ENCODE measurements at regions of chr6 and their contacts with region 1.

Region 1: DNA sequence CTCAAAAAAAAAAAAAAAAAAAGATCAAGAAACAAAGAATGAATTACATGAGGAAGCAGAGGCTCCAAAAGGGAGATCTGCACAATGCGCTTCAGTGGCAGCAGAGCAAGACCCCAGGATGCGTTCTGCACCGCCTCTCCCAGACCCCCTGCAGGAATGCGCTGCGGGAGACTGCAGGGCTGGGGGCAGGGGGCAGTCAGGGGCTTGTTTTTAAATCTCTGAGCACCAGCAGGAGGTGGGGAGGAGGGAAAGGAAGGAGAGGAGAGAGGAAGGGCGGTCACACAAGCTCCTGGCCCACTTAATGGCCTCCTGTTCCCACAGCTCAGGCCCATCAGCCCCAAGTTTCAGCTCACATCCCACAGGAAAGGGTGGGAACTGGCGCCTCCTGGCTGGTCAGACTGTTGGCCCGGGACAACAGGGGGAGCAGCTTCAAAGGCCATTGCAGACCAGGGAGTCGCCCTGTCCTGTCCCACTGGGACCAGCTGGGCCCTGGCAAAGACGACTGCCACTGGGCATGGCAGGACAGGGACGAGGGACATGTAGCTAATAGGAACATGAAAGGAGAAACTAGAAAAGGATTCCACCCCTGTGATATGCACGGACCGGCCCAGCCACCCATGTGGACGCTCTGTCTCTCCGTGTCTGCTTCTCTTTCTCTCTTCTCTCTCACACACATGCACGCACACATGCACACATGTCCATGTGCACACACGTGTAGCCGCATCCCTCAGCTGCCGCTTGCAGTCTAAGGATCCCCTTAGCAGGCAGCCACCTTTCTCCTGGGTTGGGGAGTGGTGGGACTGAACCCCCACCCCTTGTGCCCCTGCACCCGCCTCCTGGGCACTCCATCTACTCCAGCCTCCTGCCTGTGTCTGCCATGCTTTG is 34.7 kb downstream of the TFEB start:
- DNase-seq: peak; percentile 50
- ATAC-seq: peak; percentile 69
- H3K4me3 Mint-ChIP-seq: no peak overlapping the region
- H3K27ac Mint-ChIP-seq: no peak overlapping the region
- H3K4me1 Mint-ChIP-seq: peaks cover 11% of the 10 kb centered on the region
- H3K27me3 Mint-ChIP-seq: no peaks in the 10 kb centered on the region
- CTCF ChIP-seq: no peak

Region 2: DNA sequence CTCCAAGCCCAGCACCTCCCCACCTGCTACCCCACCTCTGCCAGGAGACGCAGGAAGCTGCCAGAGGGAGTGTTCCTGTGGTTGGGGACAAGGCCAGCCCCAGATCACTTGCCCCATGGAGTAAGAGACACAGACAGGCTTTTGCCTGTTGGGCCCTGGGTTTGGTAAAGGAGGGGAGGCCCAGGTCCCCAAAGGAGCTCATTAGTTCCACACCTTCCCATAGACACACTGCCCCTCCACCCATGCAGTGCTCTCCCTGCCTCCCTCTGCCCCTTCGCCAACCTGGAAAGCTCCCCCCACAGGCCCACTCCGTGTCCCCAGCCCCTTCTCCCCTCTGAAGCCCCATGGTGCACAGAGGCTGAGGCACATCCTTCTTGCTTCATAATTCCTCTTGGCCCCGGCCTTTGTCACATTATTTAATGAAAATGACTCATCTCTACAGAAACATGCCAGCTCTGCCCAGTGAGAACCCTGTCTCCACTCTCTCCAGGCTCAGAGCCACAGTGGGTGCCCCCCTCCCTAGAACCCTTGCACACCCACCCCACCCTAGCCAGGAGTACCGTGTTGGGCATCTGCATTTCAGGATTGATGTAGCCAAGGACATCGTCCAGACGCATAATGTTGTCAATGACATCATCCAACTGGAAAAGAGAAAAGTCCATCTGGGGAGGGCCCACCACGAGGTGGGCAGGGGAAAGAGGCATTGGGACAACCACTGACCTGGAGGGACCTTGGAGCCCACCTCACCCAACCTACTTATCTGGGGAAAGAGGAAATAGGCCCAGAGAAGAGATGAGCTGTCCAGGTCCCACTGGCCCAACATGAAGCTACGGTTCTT is 11.3 kb before region 1 on chr6:
- CTCF ChIA-PET with region 1: interaction called, 24 read pairs
- POLR2A ChIA-PET with region 1: no interaction called
- DNase-seq: peak; percentile 4
- ATAC-seq: no peak
- H3K4me3 Mint-ChIP-seq: no peak overlapping the region
- H3K27ac Mint-ChIP-seq: no peak overlapping the region
- H3K4me1 Mint-ChIP-seq: peaks cover 19% of the 10 kb centered on the region
- H3K27me3 Mint-ChIP-seq: peaks cover 6% of the 10 kb centered on the region
- CTCF ChIP-seq: no peak

Region 3: GRCh38 chr6:41713650-41714291 is 13.1 kb after region 1 on chr6:
- CTCF ChIA-PET with region 1: interaction called, 39 read pairs
- POLR2A ChIA-PET with region 1: no interaction called
- DNase-seq: no peak
- ATAC-seq: no peak
- H3K4me3 Mint-ChIP-seq: no peak overlapping the region
- H3K27ac Mint-ChIP-seq: no peak overlapping the region
- H3K4me1 Mint-ChIP-seq: no peaks in the 10 kb centered on the region
- H3K27me3 Mint-ChIP-seq: no peaks in the 10 kb centered on the region
- CTCF ChIP-seq: no peak

Region 4: DNA sequence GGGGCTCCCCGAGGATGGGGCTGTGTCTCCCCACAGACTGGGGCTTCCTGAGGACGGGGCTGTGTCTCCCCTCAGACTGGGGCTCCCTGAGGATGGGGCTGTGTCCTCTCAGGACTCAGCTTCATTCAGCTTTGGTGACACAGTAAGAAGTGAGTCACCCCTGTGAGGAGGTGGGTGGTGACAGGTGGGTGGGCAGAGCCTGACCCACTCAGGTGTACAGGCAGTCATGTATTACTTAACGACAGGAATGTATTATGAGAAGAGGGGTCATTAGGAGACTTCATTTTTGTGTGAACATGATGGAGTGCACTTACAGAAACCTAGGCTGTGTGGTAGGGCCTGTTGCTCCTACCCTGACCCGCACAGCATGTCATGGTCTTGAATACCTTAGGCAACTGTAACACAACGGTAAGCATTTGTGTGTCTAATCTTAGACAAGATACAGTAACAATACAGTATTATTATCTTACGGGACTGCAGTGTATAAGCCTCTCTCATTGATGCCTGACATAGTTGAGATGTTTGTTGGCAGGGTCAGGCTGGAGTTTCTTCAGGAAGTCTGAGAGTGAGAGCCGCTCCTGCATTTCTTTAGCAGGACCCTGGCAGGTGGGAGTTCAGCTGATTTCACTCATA is 57.3 kb after region 1 on chr6:
- CTCF ChIA-PET with region 1: no interaction called
- POLR2A ChIA-PET with region 1: no interaction called
- DNase-seq: no peak
- ATAC-seq: no peak
- H3K4me3 Mint-ChIP-seq: no peak overlapping the region
- H3K27ac Mint-ChIP-seq: no peak overlapping the region
- H3K4me1 Mint-ChIP-seq: peaks cover 6% of the 10 kb centered on the region
- H3K27me3 Mint-ChIP-seq: peaks cover 2% of the 10 kb centered on the region; the same call in 1 of the 2 replicates
- CTCF ChIP-seq: no peak

Measured in WTC11 (cell line).